ENCODE measurements at regions of chr4 and their contacts with region 1.

Region 1: GRCh38 chr4:163544407-163545038 is 50.0 kb downstream of the TMA16 start:
- DNase-seq: peak; percentile 12 to 76 (median 61)
- ATAC-seq: peak; percentile 93
- H3K4me3 ChIP-seq: peak overlapping the region; percentile 20 to 34
- H3K4me3 Mint-ChIP-seq: no peak overlapping the region
- H3K27ac ChIP-seq: peak overlapping the region in 1 of 2 experiments; percentile 11
- H3K27ac Mint-ChIP-seq: no peak overlapping the region
- H3K4me1 ChIP-seq: peaks cover 6% of the 10 kb centered on the region
- H3K4me1 Mint-ChIP-seq: peaks cover 6% of the 10 kb centered on the region
- H3K27me3 ChIP-seq: no peaks in the 10 kb centered on the region
- H3K27me3 Mint-ChIP-seq: no peaks in the 10 kb centered on the region
- CTCF ChIP-seq: peak; percentile 94

Region 2: DNA sequence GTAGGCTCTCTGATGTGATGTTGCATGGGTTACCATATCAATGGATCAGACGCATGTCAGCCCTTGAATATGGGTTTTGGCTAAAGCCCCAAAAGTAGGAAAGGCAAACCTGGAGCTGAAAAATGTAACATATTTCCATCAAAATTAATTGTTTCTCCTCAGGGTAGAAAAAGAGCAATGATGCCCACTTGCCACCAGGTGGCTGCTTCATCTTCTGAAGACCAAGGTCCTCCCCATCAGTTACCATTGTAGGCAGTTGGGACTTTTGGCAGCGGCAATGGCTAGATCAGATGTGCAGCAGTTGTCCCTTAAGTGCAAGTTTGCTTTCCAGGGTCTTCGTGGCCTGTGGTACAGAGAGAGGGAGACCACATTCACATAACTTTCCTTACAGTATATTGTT is 496.1 kb before region 1 on chr4:
- CTCF ChIA-PET with region 1: no interaction called
- POLR2A ChIA-PET with region 1: no interaction called
- intact Hi-C with region 1: loop called in 1 of 2 experiments (anchors 10 kb)
- DNase-seq: peak in 2 of 9 experiments; percentile 11 to 17
- ATAC-seq: no peak
- H3K4me3 ChIP-seq: no peak overlapping the region
- H3K4me3 Mint-ChIP-seq: no peak overlapping the region
- H3K27ac ChIP-seq: no peak overlapping the region
- H3K27ac Mint-ChIP-seq: no peak overlapping the region
- H3K4me1 ChIP-seq: no peaks in the 10 kb centered on the region
- H3K4me1 Mint-ChIP-seq: no peaks in the 10 kb centered on the region
- H3K27me3 ChIP-seq: no peaks in the 10 kb centered on the region
- H3K27me3 Mint-ChIP-seq: no peaks in the 10 kb centered on the region
- CTCF ChIP-seq: no peak

Region 3: DNA sequence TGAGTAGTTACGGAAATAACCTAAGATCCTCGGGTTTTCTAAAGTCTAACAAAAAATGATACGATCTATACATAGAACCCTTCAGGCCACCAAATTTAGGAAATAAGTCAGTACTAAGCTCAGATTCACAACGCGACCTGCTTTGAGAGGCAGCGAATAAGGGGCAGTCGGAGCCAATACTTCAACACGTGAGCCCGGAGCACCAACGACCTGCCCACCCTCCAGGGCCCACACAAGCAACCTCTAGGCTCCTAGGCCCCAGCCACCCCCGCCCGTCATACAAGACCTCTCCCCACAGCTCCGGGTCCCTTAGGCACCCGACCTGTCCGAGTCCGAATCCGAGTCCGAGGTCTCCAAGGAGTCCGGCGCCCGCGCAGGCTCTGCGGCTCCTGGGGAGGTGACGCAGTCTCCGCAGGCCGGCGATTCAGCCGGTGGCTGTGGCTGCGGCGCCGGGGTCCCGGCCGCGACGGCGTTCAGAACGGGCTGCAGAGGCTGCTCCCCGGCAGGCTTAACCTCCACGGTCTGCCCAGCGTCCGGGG is 378.4 kb before region 1 on chr4:
- CTCF ChIA-PET with region 1: interaction called, 3 read pairs
- POLR2A ChIA-PET with region 1: no interaction called
- intact Hi-C with region 1: loop called in 1 of 2 experiments (anchors 5 kb)
- DNase-seq: peak; percentile 12 to 73 (median 48)
- ATAC-seq: peak; percentile 54
- H3K4me3 ChIP-seq: peak overlapping the region; percentile 82 to 91
- H3K4me3 Mint-ChIP-seq: peak overlapping the region; percentile 93
- H3K27ac ChIP-seq: peak overlapping the region; percentile 93 to 97
- H3K27ac Mint-ChIP-seq: peak overlapping the region; percentile 98
- H3K4me1 ChIP-seq: peaks cover 26% of the 10 kb centered on the region
- H3K4me1 Mint-ChIP-seq: peaks cover 49% of the 10 kb centered on the region
- H3K27me3 ChIP-seq: no peaks in the 10 kb centered on the region
- H3K27me3 Mint-ChIP-seq: no peaks in the 10 kb centered on the region
- CTCF ChIP-seq: no peak

Region 4: GRCh38 chr4:163494360-163495162 is 50.0 kb before region 1 on chr4 and contains the start of gene TMA16:
- CTCF ChIA-PET with region 1: interaction called, 23 read pairs
- POLR2A ChIA-PET with region 1: interaction called, 6 read pairs
- intact Hi-C with region 1: loop called in 1 of 2 experiments (anchors 2 kb)
- DNase-seq: peak; percentile 55 to 90 (median 74)
- ATAC-seq: peak; percentile 80
- H3K4me3 ChIP-seq: peak within 1 kb of the TSS; percentile 97 to 98
- H3K4me3 Mint-ChIP-seq: peak within 1 kb of the TSS; percentile 95
- H3K27ac ChIP-seq: peak within 1 kb of the TSS; percentile 67 to 82
- H3K27ac Mint-ChIP-seq: peak within 1 kb of the TSS; percentile 89
- H3K4me1 ChIP-seq: peaks cover 11% of the 10 kb centered on the region
- H3K4me1 Mint-ChIP-seq: peaks cover 43% of the 10 kb centered on the region
- H3K27me3 ChIP-seq: no peaks in the 10 kb centered on the region
- H3K27me3 Mint-ChIP-seq: no peaks in the 10 kb centered on the region
- CTCF ChIP-seq: no peak
- total RNA-seq, gene TMA16: 3.6 to 4.2 TPM

Region 5: GRCh38 chr4:164731827-164732474 is 1187.4 kb after region 1 on chr4:
- CTCF ChIA-PET with region 1: interaction called, 28 read pairs
- POLR2A ChIA-PET with region 1: interaction called, 3 read pairs
- intact Hi-C with region 1: loop called in 1 of 2 experiments (anchors 1 kb)
- DNase-seq: peak in 7 of 9 experiments; percentile 15 to 57 (median 48)
- ATAC-seq: peak; percentile 44
- H3K4me3 ChIP-seq: no peak overlapping the region
- H3K4me3 Mint-ChIP-seq: no peak overlapping the region
- H3K27ac ChIP-seq: no peak overlapping the region
- H3K27ac Mint-ChIP-seq: no peak overlapping the region
- H3K4me1 ChIP-seq: no peaks in the 10 kb centered on the region
- H3K4me1 Mint-ChIP-seq: no peaks in the 10 kb centered on the region
- H3K27me3 ChIP-seq: peaks cover 0 to 2% of the 10 kb centered on the region in 2 experiments
- H3K27me3 Mint-ChIP-seq: peaks cover 10% of the 10 kb centered on the region
- CTCF ChIP-seq: peak; percentile 88